GM10248 (cell line): ENCODE measurements at regions of chr7 and their contacts with region 1.

Region 1: DNA sequence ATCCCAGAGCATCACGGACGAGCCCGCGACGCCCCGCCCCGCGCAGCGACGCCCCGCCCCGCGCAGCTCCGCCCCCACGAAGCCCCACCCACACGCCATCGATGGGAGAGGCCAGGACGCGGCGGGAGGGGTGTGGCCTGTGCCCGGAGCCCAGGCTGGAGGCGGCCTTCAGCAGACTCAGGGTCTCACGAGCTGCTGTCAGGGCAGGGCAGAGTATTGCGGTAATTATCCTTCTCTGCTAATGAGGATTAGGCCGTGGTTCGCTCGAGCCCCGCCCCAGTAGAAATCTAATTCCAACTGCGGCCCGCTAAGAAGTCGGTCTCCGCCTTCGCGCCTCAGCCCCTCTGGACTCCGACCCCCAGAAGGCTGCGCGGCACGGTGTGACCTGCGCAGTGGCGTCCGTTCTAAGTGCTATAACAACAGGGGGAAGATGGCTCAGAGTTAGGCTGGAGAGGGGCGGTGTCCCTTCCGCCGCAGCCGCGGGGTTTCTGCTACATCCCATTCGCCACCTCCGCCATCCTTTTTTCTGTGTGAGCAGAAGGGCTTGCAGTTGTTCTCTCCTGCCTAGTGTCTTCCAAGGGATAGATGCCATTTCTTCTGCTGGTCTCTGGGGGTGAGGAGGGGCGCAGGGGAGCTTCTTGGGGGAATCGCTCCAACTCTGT is 337 bp upstream of the NT5C3A start:
- DNase-seq: peak; percentile 96
- CTCF ChIP-seq: no peak

Region 2: GRCh38 chr7:33040803-33041516 is 22.0 kb before region 1 on chr7:
- CTCF ChIA-PET with region 1: interaction called, 3 read pairs
- POLR2A ChIA-PET with region 1: interaction called, 12 read pairs
- DNase-seq: peak; percentile 69
- CTCF ChIP-seq: no peak

Region 3: GRCh38 chr7:33048670-33049069 is 14.2 kb before region 1 on chr7:
- CTCF ChIA-PET with region 1: interaction called, 12 read pairs
- POLR2A ChIA-PET with region 1: interaction called, 6 read pairs
- DNase-seq: no peak
- CTCF ChIP-seq: no peak

Region 4: GRCh38 chr7:33091111-33091531 is 28.2 kb after region 1 on chr7:
- CTCF ChIA-PET with region 1: no interaction called
- POLR2A ChIA-PET with region 1: no interaction called
- DNase-seq: no peak
- CTCF ChIP-seq: no peak